Left ventricle myocardium inferior (tissue), 1 donor: ENCODE measurements at regions of chr4 and their contacts with region 1.

Region 1: GRCh38 chr4:121726642-121727268 is 30.0 kb upstream of the ANXA5 start:
- DNase-seq: no peak
- H3K4me3 ChIP-seq: no peak overlapping the region
- H3K27ac ChIP-seq: no peak overlapping the region
- H3K4me1 ChIP-seq: no peaks in the 10 kb centered on the region
- H3K27me3 ChIP-seq: no peaks in the 10 kb centered on the region
- CTCF ChIP-seq: peak; percentile 80

Region 2: DNA sequence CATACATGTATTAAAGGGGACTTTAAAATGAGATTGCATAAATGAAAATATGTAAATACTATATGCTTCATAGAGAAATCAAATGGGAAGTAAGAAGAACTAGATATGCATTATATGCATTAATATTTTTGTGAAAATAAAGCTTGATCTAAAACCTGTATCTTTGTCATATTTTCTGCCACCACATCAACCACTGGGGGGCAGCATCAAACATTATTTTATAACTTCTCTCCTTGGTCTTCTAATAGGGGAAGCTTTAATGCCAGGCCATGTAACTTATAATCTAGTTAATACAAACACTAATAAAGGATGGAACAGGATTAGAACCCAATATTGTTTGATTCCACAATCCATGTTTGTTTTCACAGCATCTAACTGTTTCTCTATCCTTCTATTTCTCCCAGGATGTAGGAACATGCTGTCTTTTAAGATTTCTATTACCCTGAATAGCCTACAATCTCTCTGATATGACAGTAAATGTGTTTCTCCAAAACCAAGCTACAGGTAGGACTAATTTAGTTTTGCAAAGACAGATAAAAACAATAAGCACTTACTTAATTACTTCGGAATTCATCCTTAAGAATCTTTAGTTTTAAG is 355.9 kb before region 1 on chr4:
- intact Hi-C with region 1: loop called (anchors 5 kb)
- DNase-seq: peak; percentile 22
- H3K4me3 ChIP-seq: no peak overlapping the region
- H3K27ac ChIP-seq: no peak overlapping the region
- H3K4me1 ChIP-seq: no peaks in the 10 kb centered on the region
- H3K27me3 ChIP-seq: no peaks in the 10 kb centered on the region
- CTCF ChIP-seq: peak; percentile 76

Region 3: DNA sequence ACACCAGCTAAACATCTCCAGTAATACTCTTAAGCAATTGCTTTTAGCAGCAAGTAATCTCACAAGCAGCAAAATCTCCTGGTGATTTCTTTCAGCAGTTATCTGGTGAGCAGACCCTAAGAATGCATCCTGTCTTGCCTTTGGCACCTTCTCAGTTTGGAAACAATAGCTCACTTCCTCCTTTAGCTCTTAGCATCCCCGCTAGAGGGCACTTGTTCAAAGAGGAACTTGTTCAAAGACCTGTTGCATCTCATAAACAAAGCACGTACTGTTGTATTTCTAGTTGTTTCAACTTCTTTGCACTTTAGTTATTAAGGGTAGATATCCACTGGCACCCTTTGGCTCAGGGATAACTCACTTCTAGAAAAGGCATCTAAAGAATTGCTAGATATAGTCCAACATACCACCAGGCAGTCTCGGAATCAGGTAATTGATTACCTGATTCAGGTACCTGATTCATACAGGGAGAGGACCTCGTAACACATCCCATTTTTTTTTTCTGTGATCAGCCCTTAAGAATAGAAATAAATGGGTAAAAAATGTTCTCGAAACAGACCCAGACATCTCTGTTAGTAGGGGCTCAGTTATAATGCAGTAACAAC is 264.0 kb before region 1 on chr4:
- intact Hi-C with region 1: loop called (anchors 5 kb)
- DNase-seq: no peak
- H3K4me3 ChIP-seq: no peak overlapping the region
- H3K27ac ChIP-seq: peak overlapping the region; percentile 5
- H3K4me1 ChIP-seq: no peaks in the 10 kb centered on the region
- H3K27me3 ChIP-seq: no peaks in the 10 kb centered on the region
- CTCF ChIP-seq: peak; percentile 74